ENCODE measurements at regions of chr10 and their contacts with region 1.

Region 1: GRCh38 chr10:19788075-19788686 is 28.1 kb upstream of the PLXDC2 start:
- DNase-seq: peak; percentile 82
- H3K4me3 ChIP-seq: no peak overlapping the region
- H3K27ac ChIP-seq: no peak overlapping the region
- H3K4me1 ChIP-seq: peaks cover 24% of the 10 kb centered on the region
- H3K27me3 ChIP-seq: no peaks in the 10 kb centered on the region
- CTCF ChIP-seq: peak; percentile 95

Region 2: GRCh38 chr10:19412531-19412930 is 375.6 kb before region 1 on chr10:
- CTCF ChIA-PET with region 1: no interaction called
- POLR2A ChIA-PET with region 1: no interaction called
- intact Hi-C with region 1: loop called (anchors 5 kb)
- DNase-seq: peak; percentile 72
- H3K4me3 ChIP-seq: no peak overlapping the region
- H3K27ac ChIP-seq: no peak overlapping the region
- H3K4me1 ChIP-seq: no peaks in the 10 kb centered on the region
- H3K27me3 ChIP-seq: no peaks in the 10 kb centered on the region
- CTCF ChIP-seq: peak; percentile 67

Region 3: DNA sequence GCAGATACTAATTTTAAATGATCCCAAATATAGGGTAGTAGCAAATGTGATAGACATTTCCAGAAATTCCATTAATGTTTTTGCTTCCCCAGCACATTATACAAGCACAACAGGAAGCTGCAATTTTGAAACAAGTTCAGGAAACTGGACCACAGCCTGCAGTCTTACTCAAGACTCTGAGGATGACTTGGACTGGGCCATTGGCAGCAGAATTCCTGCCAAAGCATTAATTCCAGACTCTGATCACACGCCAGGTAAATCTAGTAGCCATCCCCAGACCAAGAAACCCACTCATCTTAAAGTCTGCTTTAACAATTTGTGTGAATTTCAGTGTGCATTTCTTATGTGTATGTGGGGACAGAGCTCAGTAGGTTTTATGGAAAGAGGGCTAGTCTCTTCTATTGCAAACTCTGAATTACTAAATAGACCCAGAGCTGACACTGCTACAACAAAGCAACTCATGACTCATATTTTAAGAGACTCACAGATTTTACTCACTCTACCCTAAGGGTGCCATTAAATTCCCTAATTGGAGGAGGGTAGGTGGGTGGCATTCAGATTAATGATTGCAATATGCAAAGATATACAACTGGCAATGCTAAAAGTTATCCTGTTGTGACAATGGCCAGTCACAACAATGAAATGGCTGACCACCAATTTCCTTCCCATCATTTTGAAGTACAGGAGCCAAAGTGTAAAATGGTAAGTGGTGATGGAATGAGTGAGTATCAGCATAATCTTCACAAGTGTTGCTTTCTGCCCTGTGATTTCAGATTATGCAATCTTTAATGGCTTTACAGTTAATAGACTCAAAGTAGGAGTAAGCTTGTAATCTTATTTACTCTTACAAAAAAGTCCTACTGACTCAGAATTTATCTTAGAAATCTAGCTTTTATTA is 289.5 kb before region 1 on chr10:
- CTCF ChIA-PET with region 1: no interaction called
- POLR2A ChIA-PET with region 1: no interaction called
- intact Hi-C with region 1: loop called (anchors 5 kb)
- DNase-seq: peak; percentile 94
- H3K4me3 ChIP-seq: no peak overlapping the region
- H3K27ac ChIP-seq: no peak overlapping the region
- H3K4me1 ChIP-seq: peaks cover 23% of the 10 kb centered on the region
- H3K27me3 ChIP-seq: peaks cover 46% of the 10 kb centered on the region
- CTCF ChIP-seq: no peak

Region 4: DNA sequence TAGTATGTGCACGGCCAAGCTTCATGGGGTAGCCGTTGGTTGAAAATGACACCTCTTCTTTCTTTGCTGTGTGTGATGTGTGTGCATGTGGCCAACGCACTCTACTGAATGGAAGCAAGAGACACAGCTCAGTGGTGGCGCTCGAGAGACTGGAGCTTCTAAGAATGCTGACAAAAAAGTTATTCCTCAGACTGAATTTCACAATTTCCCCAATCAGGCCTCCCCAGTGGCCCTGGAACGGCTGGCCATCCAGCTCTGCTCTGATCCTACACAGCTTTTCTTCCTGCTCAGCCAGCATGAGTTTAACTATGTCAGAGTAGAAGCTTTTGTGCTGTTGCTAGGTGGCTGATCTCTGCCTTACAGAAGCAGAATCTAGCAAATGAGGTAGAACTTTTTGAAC is 158.6 kb before region 1 on chr10:
- CTCF ChIA-PET with region 1: no interaction called
- POLR2A ChIA-PET with region 1: no interaction called
- intact Hi-C with region 1: loop called (anchors 5 kb)
- DNase-seq: peak; percentile 70
- H3K4me3 ChIP-seq: no peak overlapping the region
- H3K27ac ChIP-seq: no peak overlapping the region
- H3K4me1 ChIP-seq: peaks cover 6% of the 10 kb centered on the region
- H3K27me3 ChIP-seq: no peaks in the 10 kb centered on the region
- CTCF ChIP-seq: peak; percentile 36; the same call in 1 of the 2 replicates